ENCODE measurements at regions of chr6 and their contacts with region 1.

Region 1: GRCh38 chr6:2634139-2634964 is 116.4 kb downstream of the MYLK4 start:
- H3K4me3 ChIP-seq: peak overlapping the region; percentile 24
- H3K27ac ChIP-seq: peak overlapping the region; percentile 83
- H3K4me1 ChIP-seq: peaks cover 21% of the 10 kb centered on the region
- CTCF ChIP-seq: peak; percentile 97

Region 2: DNA sequence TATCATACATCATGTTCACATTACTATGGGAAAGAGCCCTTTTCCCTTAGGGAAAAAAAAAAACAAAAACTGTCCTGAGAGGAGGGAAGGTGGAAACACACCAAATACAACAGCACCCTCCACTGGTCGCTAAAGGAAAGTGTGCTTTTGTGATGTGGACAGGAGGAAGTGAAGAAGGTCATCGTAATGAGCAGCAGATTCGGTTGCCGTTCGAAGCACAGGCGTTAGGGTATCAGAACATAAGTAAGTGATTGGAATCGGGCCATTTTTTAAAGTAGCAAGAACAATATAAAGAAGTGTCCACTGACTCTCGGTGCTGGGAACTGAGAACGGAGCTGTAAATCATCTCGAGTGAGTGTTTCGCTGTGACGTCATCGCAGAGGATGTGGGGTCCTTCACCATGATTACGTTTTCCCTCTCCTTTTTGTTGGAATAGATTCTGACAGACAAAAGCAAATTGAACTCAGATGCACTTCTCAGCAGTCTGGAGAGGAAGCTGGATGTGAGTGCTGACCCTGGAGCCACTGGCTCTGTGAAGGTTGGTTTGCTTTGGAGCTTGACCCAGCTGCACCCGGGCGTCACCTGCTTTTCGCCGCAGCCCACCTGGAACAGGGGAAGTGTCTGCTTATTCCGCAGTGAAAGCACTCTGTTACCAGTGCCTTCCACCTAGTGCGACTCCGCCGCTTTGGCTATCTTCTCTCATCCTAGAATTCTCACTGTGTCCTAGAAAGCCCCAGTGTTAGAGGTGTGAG is 185.4 kb before region 1 on chr6:
- CTCF ChIA-PET with region 1: interaction called, 24 read pairs
- POLR2A ChIA-PET with region 1: no interaction called
- H3K4me3 ChIP-seq: peak overlapping the region; percentile 20
- H3K27ac ChIP-seq: no peak overlapping the region
- H3K4me1 ChIP-seq: peaks cover 13% of the 10 kb centered on the region
- CTCF ChIP-seq: peak; percentile 87

Region 3: DNA sequence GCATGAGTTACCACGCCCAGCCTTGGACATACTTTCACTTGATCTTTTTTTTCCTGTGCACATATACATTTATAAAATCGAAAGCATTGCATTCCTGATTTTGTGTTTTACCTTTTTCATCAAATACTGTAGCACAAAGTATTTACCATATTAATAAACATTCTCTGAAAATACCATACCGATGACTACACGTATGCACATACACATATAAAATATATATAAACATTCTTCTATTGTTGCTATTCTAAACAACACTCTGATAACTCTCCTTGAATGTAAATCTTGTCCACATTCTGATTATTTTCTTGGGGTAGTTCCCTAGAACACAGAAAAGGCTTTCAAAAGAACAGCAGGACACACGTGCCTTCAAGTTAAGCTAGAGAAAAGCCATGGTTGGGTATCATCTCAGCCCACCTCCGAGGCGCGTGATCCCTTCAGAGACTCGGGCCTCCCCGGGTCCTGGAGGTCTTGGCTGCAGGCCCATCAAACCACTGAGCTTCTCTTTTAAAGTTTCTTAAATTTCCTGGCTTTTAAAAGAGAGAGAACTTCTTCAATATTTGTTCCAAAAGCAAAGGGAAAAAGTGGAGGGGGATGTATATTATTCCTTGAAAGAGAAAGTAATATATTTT is 81.7 kb before region 1 on chr6:
- CTCF ChIA-PET with region 1: no interaction called
- POLR2A ChIA-PET with region 1: no interaction called
- H3K4me3 ChIP-seq: no peak overlapping the region
- H3K27ac ChIP-seq: no peak overlapping the region
- H3K4me1 ChIP-seq: no peaks in the 10 kb centered on the region
- CTCF ChIP-seq: no peak

Region 4: GRCh38 chr6:2596222-2596621 is 38.1 kb before region 1 on chr6:
- CTCF ChIA-PET with region 1: interaction called, 12 read pairs
- POLR2A ChIA-PET with region 1: no interaction called
- H3K4me3 ChIP-seq: no peak overlapping the region
- H3K27ac ChIP-seq: no peak overlapping the region
- H3K4me1 ChIP-seq: no peaks in the 10 kb centered on the region
- CTCF ChIP-seq: peak; percentile 43; the same call in 1 of the 2 replicates

Region 5: DNA sequence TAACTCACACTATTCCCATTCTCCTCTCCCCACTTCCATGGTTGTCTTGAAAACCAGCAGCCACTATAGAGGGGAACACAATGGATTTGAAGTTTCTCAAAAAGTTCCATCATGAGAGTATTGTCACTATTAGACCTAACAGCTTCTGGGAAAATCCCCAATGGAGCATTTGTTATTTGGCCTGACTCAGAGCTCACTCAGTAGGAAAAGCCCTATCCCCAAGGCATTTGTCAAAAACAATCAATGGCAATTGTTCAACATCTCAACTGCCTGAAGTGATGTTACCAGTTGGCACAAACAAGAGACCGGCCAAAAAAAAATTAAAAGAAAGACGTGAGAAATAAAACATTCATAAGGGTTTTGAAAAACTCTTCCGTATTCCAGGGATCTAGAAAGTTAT is 17.6 kb after region 1 on chr6:
- CTCF ChIA-PET with region 1: interaction called, 26 read pairs
- POLR2A ChIA-PET with region 1: no interaction called
- H3K4me3 ChIP-seq: no peak overlapping the region
- H3K27ac ChIP-seq: no peak overlapping the region
- H3K4me1 ChIP-seq: 0 out of 2 replicates have a peak, but pooled peaks cover 2% of the 10 kb centered on the region
- CTCF ChIP-seq: no peak

Region 6: DNA sequence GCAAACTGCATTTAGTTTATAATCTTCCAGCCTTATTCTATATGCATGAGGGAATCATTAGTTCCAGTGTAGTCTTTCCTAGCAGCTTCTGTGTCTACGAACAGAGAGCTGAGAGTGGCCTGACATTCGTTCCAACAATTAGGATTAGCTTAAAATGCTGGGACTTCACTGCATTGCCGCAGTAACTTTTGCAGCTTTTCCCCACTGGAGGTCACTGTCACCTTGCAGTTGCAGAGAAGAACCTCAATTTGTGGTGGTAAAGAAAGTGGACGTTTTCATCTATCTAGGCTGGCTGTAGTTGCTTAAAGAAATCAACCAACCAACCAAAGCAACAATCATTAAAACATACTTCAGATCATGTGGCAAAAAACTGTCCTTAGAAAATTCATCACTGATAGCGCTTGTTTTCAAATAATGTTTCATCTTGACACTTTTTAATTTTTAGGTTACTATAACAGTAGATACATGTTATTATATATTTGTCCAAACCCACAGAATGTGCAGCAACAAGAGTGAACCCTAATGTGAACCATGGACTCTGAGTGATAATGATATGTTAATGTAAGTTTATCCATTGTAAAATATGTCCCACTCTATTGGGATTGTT is 104.1 kb after region 1 on chr6:
- CTCF ChIA-PET with region 1: interaction called, 10 read pairs
- POLR2A ChIA-PET with region 1: no interaction called
- H3K4me3 ChIP-seq: no peak overlapping the region
- H3K27ac ChIP-seq: no peak overlapping the region
- H3K4me1 ChIP-seq: no peaks in the 10 kb centered on the region
- CTCF ChIP-seq: peak; percentile 82

Measured in HEK293 (cell line).